ENCODE measurements at regions of chr6 and their contacts with region 1.

Region 1: GRCh38 chr6:53794720-53795253 is at the start of gene LRRC1:
- DNase-seq: peak; percentile 86
- ATAC-seq: peak; percentile 71
- H3K4me3 ChIP-seq: peak within 1 kb of the TSS; percentile 65 to 75
- H3K27ac ChIP-seq: peak within 1 kb of the TSS; percentile 92
- H3K4me1 ChIP-seq: peaks cover 19 to 40% of the 10 kb centered on the region in 2 experiments
- H3K27me3 ChIP-seq: no peaks in the 10 kb centered on the region
- CTCF ChIP-seq: no peak
- POLR2A ChIP-seq: peak; percentile 20
- RAD21 ChIP-seq: no peak
- total RNA-seq, gene LRRC1: 19.8 TPM

Region 2: GRCh38 chr6:53734473-53735299 is 60.1 kb before region 1 on chr6:
- CTCF ChIA-PET with region 1: interaction called, 6 read pairs
- POLR2A ChIA-PET with region 1: interaction called, 20 read pairs
- RAD21 ChIA-PET with region 1: interaction called, 4 read pairs
- intact Hi-C with region 1: loop called (anchors 2 kb)
- DNase-seq: peak; percentile 92
- ATAC-seq: peak; percentile 96
- H3K4me3 ChIP-seq: peak overlapping the region; percentile 10 to 30; a peak in 3 of 4 replicates
- H3K27ac ChIP-seq: peak overlapping the region; percentile 96
- H3K4me1 ChIP-seq: peaks cover 63 to 68% of the 10 kb centered on the region in 2 experiments
- H3K27me3 ChIP-seq: no peaks in the 10 kb centered on the region
- CTCF ChIP-seq: peak; percentile 76 to 83 (median 78); a peak in 5 of 6 replicates
- POLR2A ChIP-seq: no peak
- RAD21 ChIP-seq: peak; percentile 56

Region 3: GRCh38 chr6:53746442-53747103 is 48.2 kb before region 1 on chr6:
- CTCF ChIA-PET with region 1: no interaction called
- POLR2A ChIA-PET with region 1: no interaction called
- RAD21 ChIA-PET with region 1: no interaction called
- intact Hi-C with region 1: loop called (anchors 5 kb)
- DNase-seq: no peak
- ATAC-seq: peak; percentile 70; the same call in 1 of the 2 replicates
- H3K4me3 ChIP-seq: no peak overlapping the region
- H3K27ac ChIP-seq: no peak overlapping the region
- H3K4me1 ChIP-seq: peaks cover 24 to 29% of the 10 kb centered on the region in 2 experiments
- H3K27me3 ChIP-seq: no peaks in the 10 kb centered on the region
- CTCF ChIP-seq: no peak
- POLR2A ChIP-seq: no peak
- RAD21 ChIP-seq: no peak

Region 4: DNA sequence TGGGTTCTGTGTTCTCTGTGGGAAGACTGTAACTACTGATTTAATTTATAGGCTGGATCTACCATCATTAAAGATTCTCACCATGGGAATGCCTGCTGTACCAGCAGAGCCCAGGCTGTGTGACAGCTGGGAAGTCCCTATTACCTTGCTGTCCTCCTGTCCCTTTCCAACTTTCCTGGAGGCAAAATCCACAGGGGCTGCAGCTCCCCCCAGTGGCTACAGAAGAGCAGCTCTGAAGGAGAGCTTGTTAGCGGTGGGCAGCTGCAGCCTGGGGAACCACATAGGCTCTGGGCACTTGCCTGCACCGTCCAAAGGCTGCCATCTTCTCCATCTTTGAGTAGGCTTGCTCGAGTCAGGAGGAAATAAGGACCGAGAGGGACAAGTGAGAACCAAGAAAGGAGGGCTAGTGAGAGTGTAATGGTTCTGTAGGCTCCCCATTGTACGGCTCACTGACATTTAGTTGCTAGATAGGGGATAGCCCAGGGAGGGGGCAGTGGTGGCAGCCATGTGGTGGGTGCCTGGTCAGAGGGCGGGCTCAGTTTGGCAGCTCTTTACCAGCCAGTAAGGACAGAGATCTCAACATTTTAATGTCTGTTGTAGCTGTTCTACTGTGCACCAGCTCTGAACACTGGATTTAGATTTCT is 161.4 kb after region 1 on chr6:
- CTCF ChIA-PET with region 1: interaction called, 14 read pairs
- POLR2A ChIA-PET with region 1: interaction called, 9 read pairs
- RAD21 ChIA-PET with region 1: interaction called, 3 to 5 read pairs
- intact Hi-C with region 1: loop called (anchors 1 kb)
- DNase-seq: peak; percentile 72
- ATAC-seq: peak; percentile 99
- H3K4me3 ChIP-seq: no peak overlapping the region
- H3K27ac ChIP-seq: no peak overlapping the region
- H3K4me1 ChIP-seq: peaks cover 0 to 8% of the 10 kb centered on the region in 2 experiments; a peak in 1 of 4 replicates
- H3K27me3 ChIP-seq: no peaks in the 10 kb centered on the region
- CTCF ChIP-seq: peak; percentile 78 to 85 (median 82)
- POLR2A ChIP-seq: no peak
- RAD21 ChIP-seq: peak; percentile 90

Region 5: DNA sequence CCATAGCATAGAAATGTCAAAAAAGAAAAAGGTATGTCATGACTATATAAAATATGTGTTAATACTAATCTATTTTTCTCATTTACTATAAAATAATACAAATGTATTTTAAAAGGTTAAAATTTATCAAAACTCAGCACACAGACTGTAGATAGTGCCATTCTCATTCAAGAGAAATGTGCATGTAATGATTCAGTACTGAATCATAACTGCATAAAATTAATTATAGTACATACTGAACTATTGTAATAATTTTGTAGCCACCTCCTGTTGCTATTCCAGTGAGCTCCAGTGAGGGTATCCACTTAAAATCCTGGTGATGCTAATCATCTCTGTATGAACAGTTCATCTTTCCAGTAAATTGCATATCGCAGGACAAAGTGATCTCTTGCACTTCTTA is 1701.4 kb after region 1 on chr6:
- CTCF ChIA-PET with region 1: no interaction called
- POLR2A ChIA-PET with region 1: no interaction called
- RAD21 ChIA-PET with region 1: no interaction called
- intact Hi-C with region 1: no loop called
- DNase-seq: no peak
- ATAC-seq: no peak
- H3K4me3 ChIP-seq: no peak overlapping the region
- H3K27ac ChIP-seq: no peak overlapping the region
- H3K4me1 ChIP-seq: no peaks in the 10 kb centered on the region
- H3K27me3 ChIP-seq: peaks cover 24% of the 10 kb centered on the region
- CTCF ChIP-seq: no peak
- POLR2A ChIP-seq: no peak
- RAD21 ChIP-seq: no peak